Astrocyte of the cerebellum (primary cell): ENCODE measurements at regions of chr9 and their contacts with region 1.

Region 1: DNA sequence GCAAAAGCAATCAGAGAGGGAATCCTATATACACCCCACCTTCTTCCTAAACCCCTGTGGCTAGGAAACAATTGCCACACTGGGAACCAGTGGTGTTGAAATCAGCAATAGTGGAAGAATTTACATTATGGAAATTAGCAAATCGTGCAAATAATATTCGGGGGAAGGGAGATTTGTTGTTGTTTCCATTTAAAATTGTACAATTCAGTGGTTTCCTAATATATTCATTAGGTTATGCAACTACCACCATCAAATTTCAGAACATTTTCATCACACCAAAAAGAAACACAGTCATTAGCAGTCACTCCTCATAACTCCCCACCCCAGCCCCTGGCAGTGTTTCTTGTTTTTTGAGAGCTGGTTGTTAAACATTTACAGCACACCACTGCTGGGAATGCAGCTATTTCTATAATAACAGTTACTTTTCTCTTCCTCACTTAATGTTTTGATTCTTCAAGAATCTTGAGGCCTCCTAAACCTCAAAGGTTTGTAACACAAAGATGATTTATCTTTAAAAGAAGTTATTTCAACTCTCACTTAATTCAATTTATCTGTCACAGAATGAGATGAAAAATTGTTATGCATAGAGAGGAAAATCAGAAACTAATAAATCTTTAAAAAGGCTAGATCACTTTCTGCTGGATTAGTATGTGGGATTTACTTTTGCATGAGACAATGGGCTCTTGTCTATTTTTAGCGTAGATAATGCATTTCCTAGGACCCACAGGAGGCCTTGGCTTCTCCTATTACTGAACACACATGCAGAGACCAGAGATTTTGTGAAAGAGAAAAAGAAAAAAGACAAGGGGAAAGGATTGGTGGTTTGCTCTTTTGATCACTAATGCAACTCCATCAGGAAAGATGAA is 91.8 kb upstream of the DAPK1 start:
- DNase-seq: peak; percentile 19
- H3K4me3 ChIP-seq: no peak overlapping the region
- CTCF ChIP-seq: no peak

Region 2: DNA sequence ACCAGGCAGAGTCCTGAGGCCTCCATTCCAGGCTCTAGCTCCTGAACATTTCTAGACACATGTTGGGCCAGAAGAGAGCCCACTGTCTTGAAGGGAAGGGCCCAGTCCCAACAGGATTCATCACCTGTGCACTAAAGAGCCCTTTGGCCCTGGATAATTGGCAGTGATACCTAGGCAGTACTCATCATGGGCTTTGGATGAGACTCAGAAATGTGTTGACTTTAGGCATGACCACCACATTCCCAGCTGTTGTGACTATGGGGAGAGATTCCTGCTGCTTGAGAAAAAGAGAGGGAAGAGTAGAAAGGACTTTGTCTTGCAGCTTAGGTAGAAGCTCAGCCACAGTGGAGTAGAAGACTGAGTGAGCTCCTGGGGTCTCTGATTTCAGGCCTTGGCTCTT is 46.6 kb before region 1 on chr9:
- in situ Hi-C with region 1: no loop called
- DNase-seq: no peak
- H3K4me3 ChIP-seq: no peak overlapping the region
- CTCF ChIP-seq: no peak

Region 3: GRCh38 chr9:87479801-87480201 is 73.9 kb after region 1 on chr9:
- in situ Hi-C with region 1: loop called (anchors 5 kb)
- DNase-seq: no peak
- H3K4me3 ChIP-seq: no peak overlapping the region
- CTCF ChIP-seq: no peak

Region 4: DNA sequence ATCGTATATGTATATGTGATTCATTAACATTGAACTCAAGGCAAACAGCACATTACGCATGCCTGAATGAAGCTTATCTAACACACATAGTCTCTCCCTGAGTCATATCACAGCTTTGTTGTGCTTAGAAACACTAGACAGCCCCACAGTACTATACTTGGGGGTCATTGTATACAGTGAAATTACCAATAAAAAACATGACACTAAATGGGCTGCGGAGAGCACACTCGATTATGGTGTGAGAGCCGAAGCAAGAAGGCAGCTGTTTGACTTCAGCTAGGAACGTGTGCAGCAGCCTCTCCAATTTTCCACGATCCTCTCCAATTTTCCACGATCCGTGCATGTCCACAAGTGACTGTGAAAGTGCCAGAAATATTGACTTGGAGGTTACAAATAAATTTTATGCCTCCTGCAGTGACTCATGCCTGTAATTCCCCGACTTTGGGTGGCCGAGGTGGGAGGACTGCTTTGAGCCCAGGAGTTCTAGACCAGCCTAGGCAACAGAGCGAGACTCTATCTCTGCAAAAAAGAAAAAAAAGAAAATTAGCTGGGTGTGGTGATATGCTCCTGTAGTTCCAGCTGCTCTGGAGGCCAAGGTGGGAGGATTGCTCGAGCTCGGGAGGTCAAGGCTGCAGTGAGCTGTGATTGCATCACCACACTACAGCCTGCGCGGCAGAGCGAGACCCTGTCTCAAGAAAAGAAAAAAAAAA is 194.1 kb after region 1 on chr9:
- in situ Hi-C with region 1: no loop called
- DNase-seq: peak; percentile 77
- H3K4me3 ChIP-seq: no peak overlapping the region
- CTCF ChIP-seq: no peak